CD4-positive, alpha-beta memory T cell (primary cell): ENCODE measurements at regions of chr10 and their contacts with region 1.

Region 1: DNA sequence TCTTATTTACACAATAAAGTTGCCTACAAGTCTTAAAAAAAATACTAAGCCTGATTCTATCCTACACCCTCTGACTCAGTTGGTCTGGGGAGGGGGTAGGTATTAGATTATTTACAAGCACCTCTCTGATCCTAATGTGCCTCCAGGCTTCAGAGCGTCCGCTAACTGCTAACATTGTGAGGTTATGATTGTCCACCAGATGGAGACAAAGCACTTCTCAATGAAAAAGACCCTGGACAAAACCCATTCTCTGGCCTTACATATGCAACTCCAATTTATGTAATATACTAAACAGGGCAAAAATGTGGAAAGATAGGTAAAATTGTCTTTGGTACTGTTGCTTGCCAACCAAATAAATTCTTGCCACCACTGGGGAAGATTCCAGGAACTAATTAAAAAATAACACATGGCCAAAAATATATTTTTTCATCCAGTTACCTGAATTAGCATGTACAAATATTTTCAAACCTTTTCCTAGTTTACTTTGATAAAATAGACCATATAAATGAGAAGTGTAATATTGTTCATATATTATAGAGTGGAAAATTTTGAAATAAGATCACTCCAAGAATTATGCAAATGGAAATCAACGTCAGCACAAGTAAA is 92.4 kb downstream of the KIF20B start:
- DNase-seq: peak in 4 of 5 donors; percentile 33 to 56 (median 53)
- H3K4me3 ChIP-seq: no peak overlapping the region
- H3K4me3 Mint-ChIP-seq: no peak overlapping the region
- H3K27ac ChIP-seq: no peak overlapping the region
- H3K27ac Mint-ChIP-seq: no peak overlapping the region
- H3K4me1 ChIP-seq: no peaks in the 10 kb centered on the region
- H3K4me1 Mint-ChIP-seq: peaks cover 0 to 5% (median 0%) of the 10 kb centered on the region in 4 donors
- H3K27me3 ChIP-seq: no peaks in the 10 kb centered on the region
- H3K27me3 Mint-ChIP-seq: peaks cover 7% of the 10 kb centered on the region in 2 donors

Region 2: DNA sequence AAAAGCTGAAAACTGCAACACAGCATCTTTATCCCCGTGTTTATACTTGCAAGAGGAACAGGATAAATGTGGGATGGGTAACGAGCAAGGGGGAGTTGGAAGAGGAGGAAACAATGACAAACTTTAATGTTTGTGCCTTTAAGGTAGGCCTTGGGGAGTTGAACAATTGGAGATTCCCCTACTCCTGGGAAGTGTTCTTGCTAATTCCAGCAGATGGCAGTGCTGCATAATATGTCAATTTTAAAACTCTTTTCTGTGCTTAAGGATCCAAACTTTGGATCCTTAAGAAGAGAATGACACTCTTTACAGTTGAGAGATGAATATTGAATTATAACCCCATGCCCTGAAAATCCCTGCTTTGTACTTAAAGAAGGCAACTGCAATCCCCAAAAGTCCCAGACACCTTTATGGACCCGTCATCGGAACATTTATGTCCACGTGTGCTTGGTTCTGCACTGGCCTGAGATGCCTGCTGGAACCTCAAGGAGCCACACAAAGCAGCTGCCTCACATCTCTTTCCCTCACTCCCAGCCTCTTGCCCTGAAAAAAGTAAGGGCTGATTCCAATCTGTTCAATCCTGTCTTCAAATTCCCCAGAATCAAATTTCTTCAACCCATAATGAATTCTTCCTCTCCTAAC is 367.4 kb before region 1 on chr10:
- CTCF ChIA-PET with region 1: no interaction called
- POLR2A ChIA-PET with region 1: no interaction called
- intact Hi-C with region 1: loop called (anchors 10 kb)
- DNase-seq: peak in 3 of 5 donors; percentile 21 to 35 (median 28)
- H3K4me3 ChIP-seq: no peak overlapping the region
- H3K4me3 Mint-ChIP-seq: no peak overlapping the region
- H3K27ac ChIP-seq: no peak overlapping the region
- H3K27ac Mint-ChIP-seq: no peak overlapping the region
- H3K4me1 ChIP-seq: no peaks in the 10 kb centered on the region
- H3K4me1 Mint-ChIP-seq: peaks cover 0 to 2% (median 1%) of the 10 kb centered on the region in 4 donors
- H3K27me3 ChIP-seq: no peaks in the 10 kb centered on the region
- H3K27me3 Mint-ChIP-seq: peaks cover 0 to 3% of the 10 kb centered on the region in 2 donors

Region 3: DNA sequence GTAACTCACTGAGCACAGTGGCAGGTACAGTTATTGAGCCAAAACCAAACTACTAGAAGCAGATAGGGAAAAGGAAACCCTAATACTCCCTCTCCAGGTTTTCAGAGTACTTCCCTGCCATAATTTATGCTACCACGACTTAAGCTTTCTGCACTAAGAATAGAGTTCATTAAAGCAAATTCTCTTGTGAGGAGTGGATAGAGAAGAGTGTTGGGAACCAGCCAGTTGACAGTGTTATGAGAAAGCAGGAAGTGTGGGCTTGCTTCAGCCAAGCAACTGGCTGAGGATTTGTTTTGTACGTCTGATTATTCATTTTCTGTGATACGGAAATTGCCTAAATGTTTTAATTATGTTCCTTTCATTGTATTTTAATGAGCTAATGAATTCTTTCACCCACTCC is 188.1 kb after region 1 on chr10:
- CTCF ChIA-PET with region 1: no interaction called
- POLR2A ChIA-PET with region 1: no interaction called
- intact Hi-C with region 1: no loop called
- DNase-seq: no peak
- H3K4me3 ChIP-seq: no peak overlapping the region
- H3K4me3 Mint-ChIP-seq: no peak overlapping the region
- H3K27ac ChIP-seq: no peak overlapping the region
- H3K27ac Mint-ChIP-seq: no peak overlapping the region
- H3K4me1 ChIP-seq: no peaks in the 10 kb centered on the region
- H3K4me1 Mint-ChIP-seq: no peaks in the 10 kb centered on the region
- H3K27me3 ChIP-seq: no peaks in the 10 kb centered on the region
- H3K27me3 Mint-ChIP-seq: peaks cover 2 to 3% of the 10 kb centered on the region in 2 donors

Region 4: DNA sequence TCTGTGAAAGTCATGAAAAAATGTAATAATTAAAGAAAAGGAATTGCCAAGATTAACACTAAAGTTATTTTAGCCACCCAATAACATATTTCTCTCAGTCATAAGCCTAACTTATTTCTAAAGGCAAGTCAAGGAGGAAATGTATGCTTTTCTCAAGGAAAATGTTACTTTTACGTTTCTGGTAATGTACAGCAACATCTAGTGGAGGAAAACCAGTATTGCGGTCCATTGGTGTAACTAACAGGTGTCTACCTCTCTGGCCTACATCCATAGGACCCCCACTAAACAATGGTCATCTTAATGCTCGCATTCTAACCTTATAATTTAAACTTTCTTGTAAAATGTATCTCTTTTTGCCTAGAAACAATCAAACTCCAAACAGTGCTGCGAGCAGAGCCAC is 345.1 kb after region 1 on chr10:
- CTCF ChIA-PET with region 1: no interaction called
- POLR2A ChIA-PET with region 1: no interaction called
- intact Hi-C with region 1: loop called (anchors 5 kb)
- DNase-seq: no peak
- H3K4me3 ChIP-seq: no peak overlapping the region
- H3K4me3 Mint-ChIP-seq: no peak overlapping the region
- H3K27ac ChIP-seq: no peak overlapping the region
- H3K27ac Mint-ChIP-seq: no peak overlapping the region
- H3K4me1 ChIP-seq: no peaks in the 10 kb centered on the region
- H3K4me1 Mint-ChIP-seq: no peaks in the 10 kb centered on the region
- H3K27me3 ChIP-seq: no peaks in the 10 kb centered on the region
- H3K27me3 Mint-ChIP-seq: peaks cover 0 to 2% of the 10 kb centered on the region in 2 donors

Region 5: GRCh38 chr10:90592638-90593302 is 799.0 kb after region 1 on chr10:
- CTCF ChIA-PET with region 1: no interaction called
- POLR2A ChIA-PET with region 1: no interaction called
- intact Hi-C with region 1: loop called (anchors 10 kb)
- DNase-seq: no peak
- H3K4me3 ChIP-seq: no peak overlapping the region
- H3K4me3 Mint-ChIP-seq: no peak overlapping the region
- H3K27ac ChIP-seq: no peak overlapping the region
- H3K27ac Mint-ChIP-seq: peak overlapping the region in 1 of 7 donors; percentile 19
- H3K4me1 ChIP-seq: no peaks in the 10 kb centered on the region
- H3K4me1 Mint-ChIP-seq: peaks cover 0 to 4% (median 0%) of the 10 kb centered on the region in 4 donors
- H3K27me3 ChIP-seq: no peaks in the 10 kb centered on the region
- H3K27me3 Mint-ChIP-seq: peaks cover 2 to 5% of the 10 kb centered on the region in 2 donors

Region 6: GRCh38 chr10:90787393-90788198 is 993.8 kb after region 1 on chr10:
- CTCF ChIA-PET with region 1: interaction called, 16 read pairs
- POLR2A ChIA-PET with region 1: no interaction called
- intact Hi-C with region 1: loop called (anchors 1 kb)
- DNase-seq: peak in 4 of 5 donors; percentile 7 to 29 (median 22)
- H3K4me3 ChIP-seq: no peak overlapping the region
- H3K4me3 Mint-ChIP-seq: no peak overlapping the region
- H3K27ac ChIP-seq: no peak overlapping the region
- H3K27ac Mint-ChIP-seq: no peak overlapping the region
- H3K4me1 ChIP-seq: no peaks in the 10 kb centered on the region
- H3K4me1 Mint-ChIP-seq: no peaks in the 10 kb centered on the region
- H3K27me3 ChIP-seq: no peaks in the 10 kb centered on the region
- H3K27me3 Mint-ChIP-seq: peaks cover 8% of the 10 kb centered on the region in 2 donors

Region 7: GRCh38 chr10:90862908-90863514 is 1069.3 kb after region 1 on chr10:
- CTCF ChIA-PET with region 1: interaction called, 3 read pairs
- POLR2A ChIA-PET with region 1: no interaction called
- intact Hi-C with region 1: loop called (anchors 1 kb)
- DNase-seq: peak in 3 of 5 donors; percentile 10 to 26 (median 14)
- H3K4me3 ChIP-seq: no peak overlapping the region
- H3K4me3 Mint-ChIP-seq: no peak overlapping the region
- H3K27ac ChIP-seq: no peak overlapping the region
- H3K27ac Mint-ChIP-seq: no peak overlapping the region
- H3K4me1 ChIP-seq: no peaks in the 10 kb centered on the region
- H3K4me1 Mint-ChIP-seq: peaks cover 0 to 6% (median 3%) of the 10 kb centered on the region in 4 donors
- H3K27me3 ChIP-seq: peaks cover 15% of the 10 kb centered on the region
- H3K27me3 Mint-ChIP-seq: peaks cover 21 to 29% of the 10 kb centered on the region in 2 donors